ENCODE measurements at regions of chr3 and their contacts with region 1.

Region 1: DNA sequence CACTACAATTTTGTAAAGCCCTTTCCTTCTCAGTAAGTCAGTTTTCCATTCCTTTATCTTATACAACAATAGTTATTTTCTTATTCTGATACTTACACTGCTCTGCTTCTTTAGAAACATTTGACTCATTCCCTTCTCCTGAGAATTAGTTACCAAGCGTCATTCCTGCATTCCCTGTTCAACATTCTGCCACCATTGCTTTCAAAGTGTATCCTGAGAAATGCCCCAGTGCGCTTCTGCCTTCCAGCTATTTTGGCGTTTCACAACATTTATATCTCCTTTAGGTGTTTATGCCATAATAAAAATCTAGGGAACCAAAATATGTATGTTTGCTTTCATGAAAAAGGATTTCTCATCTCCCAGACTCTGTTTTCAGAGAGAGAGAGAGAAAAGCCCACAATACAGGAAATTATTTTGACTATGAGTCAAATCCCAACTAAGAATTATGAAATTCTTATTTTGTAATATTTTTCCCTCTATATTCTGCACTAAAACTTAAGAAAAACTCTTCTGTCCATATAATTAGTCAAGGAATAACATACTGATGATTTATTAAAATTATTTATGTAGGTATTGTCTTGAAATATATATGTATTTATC is 118.2 kb upstream of the RAP2B start:
- DNase-seq: no peak
- CTCF ChIP-seq: no peak

Region 2: DNA sequence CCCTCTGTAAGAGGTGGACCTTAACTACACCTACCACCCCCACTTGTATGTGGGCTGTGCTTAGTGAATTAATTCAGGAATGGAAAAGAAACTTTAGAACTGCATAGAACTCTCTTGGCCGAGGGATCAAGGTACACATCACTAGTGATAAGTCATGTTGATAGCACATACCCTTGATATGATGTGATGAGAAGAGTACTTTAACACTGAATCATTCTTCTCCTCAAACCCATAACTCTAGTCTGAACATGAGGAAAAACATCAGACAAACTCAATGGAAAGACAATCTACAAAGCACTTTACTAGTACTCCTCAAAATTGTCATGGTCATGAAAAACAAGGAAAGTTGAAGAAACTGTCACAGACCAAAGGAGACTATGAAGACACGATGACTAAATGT is 121.3 kb before region 1 on chr3:
- CTCF ChIA-PET with region 1: no interaction called
- POLR2A ChIA-PET with region 1: no interaction called
- DNase-seq: no peak
- CTCF ChIP-seq: no peak

Region 3: GRCh38 chr3:153032891-153033290 is 10.9 kb before region 1 on chr3:
- CTCF ChIA-PET with region 1: interaction called, 12 read pairs
- POLR2A ChIA-PET with region 1: no interaction called
- DNase-seq: no peak
- CTCF ChIP-seq: no peak

Region 4: DNA sequence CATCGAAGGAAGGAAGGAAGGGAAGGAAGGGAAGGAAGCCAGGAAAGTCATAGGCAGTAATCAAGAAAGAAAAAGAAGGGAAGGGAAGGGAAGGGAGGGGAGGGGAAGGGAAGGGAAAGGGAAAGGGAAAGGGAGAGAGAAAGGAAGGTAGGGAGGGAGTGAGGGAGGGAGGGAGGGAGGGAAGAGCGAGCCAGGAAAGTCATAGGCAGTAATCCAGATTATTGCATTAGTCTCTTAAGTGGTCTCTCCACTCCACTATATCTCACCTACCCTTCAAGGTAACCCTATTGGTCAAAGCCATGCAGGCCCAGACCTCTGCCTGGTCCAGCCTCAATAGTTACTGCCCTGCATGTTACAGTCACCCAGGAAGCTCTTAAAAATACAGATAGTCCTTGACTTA is 11.9 kb after region 1 on chr3:
- CTCF ChIA-PET with region 1: interaction called, 10 read pairs
- POLR2A ChIA-PET with region 1: no interaction called
- DNase-seq: no peak
- CTCF ChIP-seq: no peak

Measured in GM10248 (cell line).